Posterior cingulate gyrus (tissue), 11 donors: ENCODE measurements at regions of chr19 and their contacts with region 1.

Region 1: DNA sequence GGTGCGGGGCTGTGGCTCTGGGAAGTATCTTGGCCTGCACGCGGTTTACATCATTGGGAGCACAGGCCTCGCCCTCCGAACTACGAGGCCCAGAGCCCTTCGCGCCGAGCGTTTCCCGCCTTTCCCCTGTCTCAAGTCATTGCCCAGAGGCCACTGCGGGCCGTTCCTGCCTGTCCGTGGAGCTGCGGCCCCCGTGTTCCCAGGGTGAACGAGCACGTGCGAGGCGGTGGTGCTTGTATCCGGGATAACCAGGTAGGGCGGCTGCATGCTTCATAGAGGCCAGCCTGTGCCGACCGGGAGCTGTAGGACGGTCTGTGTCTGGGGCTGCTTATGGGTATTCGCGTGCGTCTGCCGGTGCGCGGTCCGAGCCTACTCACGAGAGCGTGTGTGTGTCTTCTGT is 32.5 kb downstream of the ZNF527 start:
- DNase-seq: peak in 2 of 10 donors; percentile 66 to 78

Region 2: GRCh38 chr19:37370880-37371661 is 32.3 kb before region 1 on chr19 and contains the start of gene ZNF527:
- intact Hi-C with region 1: no loop called
- DNase-seq: peak; percentile 98 to 100 (median 99)

Region 3: GRCh38 chr19:37492213-37492612 is 88.8 kb after region 1 on chr19:
- intact Hi-C with region 1: loop called (anchors 5 kb)
- DNase-seq: no peak

Region 4: DNA sequence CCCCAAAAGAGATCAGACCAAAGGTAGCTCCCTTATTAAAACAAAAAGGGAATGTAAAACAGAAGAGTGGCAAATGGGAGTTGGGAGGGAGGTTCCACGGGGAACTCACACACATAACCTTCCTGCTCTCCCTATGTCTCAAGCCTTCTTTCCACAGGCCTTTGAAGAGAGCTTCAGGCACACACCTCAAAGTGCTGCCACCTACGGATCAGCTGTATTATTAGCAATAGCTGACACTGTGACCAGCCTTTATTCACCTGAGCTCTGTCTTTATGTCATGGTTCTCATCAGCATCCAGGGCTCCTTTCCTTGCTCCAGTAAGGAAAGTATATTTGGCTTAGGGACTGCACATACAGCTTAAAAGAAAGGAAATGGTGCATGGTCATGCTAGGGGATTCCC is 179.9 kb after region 1 on chr19:
- intact Hi-C with region 1: no loop called
- DNase-seq: no peak